Astrocyte of the spinal cord (primary cell): ENCODE measurements at regions of chr5 and their contacts with region 1.

Region 1: GRCh38 chr5:149828161-149828884 is 98.2 kb downstream of the PPARGC1B start:
- DNase-seq: peak; percentile 90
- H3K4me3 ChIP-seq: no peak overlapping the region
- CTCF ChIP-seq: peak; percentile 85

Region 2: GRCh38 chr5:149636851-149637246 is 191.5 kb before region 1 on chr5:
- in situ Hi-C with region 1: loop called (anchors 10 kb)
- DNase-seq: peak; percentile 61
- H3K4me3 ChIP-seq: no peak overlapping the region
- CTCF ChIP-seq: peak; percentile 81

Region 3: DNA sequence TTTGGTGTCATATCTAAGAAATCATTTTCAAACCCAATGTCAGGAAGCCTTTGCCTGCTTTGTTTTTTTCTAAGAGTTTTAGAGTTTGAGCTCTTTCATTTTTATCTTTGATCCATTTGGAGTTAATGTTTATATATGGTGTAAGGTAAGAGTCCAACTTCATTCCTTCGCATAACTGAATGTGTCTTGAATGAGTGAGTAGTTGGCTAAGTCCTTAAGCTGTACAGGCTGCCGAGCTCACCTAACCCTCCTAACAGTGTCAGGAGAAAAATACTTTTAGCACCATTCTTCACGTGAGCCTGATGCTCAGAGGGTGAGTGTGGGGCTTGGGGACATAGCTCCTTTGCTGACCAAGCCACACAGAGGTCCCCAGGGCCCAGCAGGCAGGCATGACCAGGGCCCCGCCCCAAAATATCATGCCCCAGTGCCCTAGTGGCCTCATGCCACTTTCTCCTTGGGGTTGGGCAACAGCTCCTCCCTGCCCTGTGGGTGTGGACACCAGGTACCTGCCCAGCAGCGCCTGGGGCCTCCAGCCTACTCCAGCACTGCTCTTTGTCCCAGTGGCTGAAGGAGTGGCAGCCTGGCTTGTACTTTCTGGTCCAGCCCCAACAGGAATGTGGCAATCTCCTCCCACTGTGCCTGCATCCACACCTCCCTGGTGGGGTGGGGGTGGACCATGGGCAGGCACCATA is 81.0 kb before region 1 on chr5:
- in situ Hi-C with region 1: no loop called
- DNase-seq: no peak
- H3K4me3 ChIP-seq: no peak overlapping the region
- CTCF ChIP-seq: no peak